Activated naive CD4-positive, alpha-beta T cell treated with anti-CD3 and anti-CD28 coated beads for 36 hours (primary cell): ENCODE measurements at regions of chr11 and their contacts with region 1.

Region 1: DNA sequence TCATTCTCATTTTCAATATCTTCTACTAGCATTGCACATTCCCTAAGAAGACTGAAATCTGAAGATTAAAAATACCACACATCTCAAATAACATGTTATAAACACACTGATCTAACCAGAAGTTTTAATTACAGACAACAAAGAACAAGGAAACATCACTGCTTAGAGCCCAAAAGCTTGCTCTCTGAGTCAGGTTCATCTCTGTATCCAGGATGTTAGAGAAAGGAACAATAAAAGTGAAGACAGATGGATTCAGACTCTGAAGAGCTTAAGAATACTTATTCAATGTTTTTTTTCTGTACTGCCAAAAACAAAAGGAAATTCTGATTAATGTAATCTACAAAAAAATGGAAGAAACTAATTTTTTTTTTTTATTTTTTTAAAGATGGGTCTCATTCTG is 16.5 kb downstream of the RDX start:
- DNase-seq: no peak
- H3K4me3 Mint-ChIP-seq: no peak overlapping the region
- H3K27ac Mint-ChIP-seq: no peak overlapping the region
- H3K4me1 Mint-ChIP-seq: no peaks in the 10 kb centered on the region
- H3K27me3 Mint-ChIP-seq: no peaks in the 10 kb centered on the region

Region 2: GRCh38 chr11:110251837-110252236 is 28.0 kb before region 1 on chr11:
- CTCF ChIA-PET with region 1: interaction called, 3 read pairs
- intact Hi-C with region 1: loop called (anchors 2 kb)
- DNase-seq: no peak
- H3K4me3 Mint-ChIP-seq: no peak overlapping the region
- H3K27ac Mint-ChIP-seq: no peak overlapping the region
- H3K4me1 Mint-ChIP-seq: peaks cover 12% of the 10 kb centered on the region
- H3K27me3 Mint-ChIP-seq: no peaks in the 10 kb centered on the region

Region 3: GRCh38 chr11:110296226-110297075 is 16.6 kb after region 1 on chr11 and contains the start of gene RDX:
- CTCF ChIA-PET with region 1: no interaction called
- intact Hi-C with region 1: loop called (anchors 2 kb)
- DNase-seq: peak; percentile 53
- H3K4me3 Mint-ChIP-seq: peak within 1 kb of the TSS; percentile 91
- H3K27ac Mint-ChIP-seq: peak within 1 kb of the TSS; percentile 83
- H3K4me1 Mint-ChIP-seq: peaks cover 39% of the 10 kb centered on the region
- H3K27me3 Mint-ChIP-seq: no peaks in the 10 kb centered on the region
- total RNA-seq, gene RDX: 35.2 to 37.4 TPM